ENCODE measurements at regions of chr19 and their contacts with region 1.

Region 1: GRCh38 chr19:13833330-13834243 is 38.3 kb downstream of the ZSWIM4 start:
- DNase-seq: peak; percentile 86
- ATAC-seq: peak; percentile 89
- H3K4me3 ChIP-seq: no peak overlapping the region
- H3K27ac ChIP-seq: peak overlapping the region; percentile 20
- H3K4me1 ChIP-seq: peaks cover 31% of the 10 kb centered on the region
- H3K27me3 ChIP-seq: no peaks in the 10 kb centered on the region
- CTCF ChIP-seq: peak; percentile 49
- POLR2A ChIP-seq: peak; percentile 78
- RAD21 ChIP-seq: no peak; the same call in 1 of the 2 replicates

Region 2: GRCh38 chr19:12789904-12790619 is 1043.5 kb before region 1 on chr19:
- CTCF ChIA-PET with region 1: no interaction called
- POLR2A ChIA-PET with region 1: no interaction called
- dilution Hi-C with region 1: no loop called
- in situ Hi-C with region 1: loop called (anchors 25 kb)
- intact Hi-C with region 1: no loop called
- DNase-seq: peak; percentile 93
- ATAC-seq: peak; percentile 60
- H3K4me3 ChIP-seq: peak overlapping the region; percentile 39
- H3K27ac ChIP-seq: peak overlapping the region; percentile 89
- H3K4me1 ChIP-seq: peaks cover 27% of the 10 kb centered on the region
- H3K27me3 ChIP-seq: no peaks in the 10 kb centered on the region
- CTCF ChIP-seq: no peak
- POLR2A ChIP-seq: peak; percentile 15; the same call in 1 of the 2 replicates
- RAD21 ChIP-seq: no peak

Region 3: GRCh38 chr19:13774217-13775191 is 59.1 kb before region 1 on chr19 and contains the start of gene C19orf53:
- CTCF ChIA-PET with region 1: no interaction called
- POLR2A ChIA-PET with region 1: interaction called, 11 read pairs
- dilution Hi-C with region 1: no loop called
- in situ Hi-C with region 1: no loop called
- intact Hi-C with region 1: no loop called
- DNase-seq: peak; percentile 94
- ATAC-seq: peak; percentile 98
- H3K4me3 ChIP-seq: peak within 1 kb of the TSS; percentile 78
- H3K27ac ChIP-seq: peak within 1 kb of the TSS; percentile 82
- H3K4me1 ChIP-seq: peaks cover 7% of the 10 kb centered on the region; the same call in 1 of the 2 replicates
- H3K27me3 ChIP-seq: no peaks in the 10 kb centered on the region
- CTCF ChIP-seq: no peak
- POLR2A ChIP-seq: peak; percentile 74; the same call in 1 of the 2 replicates
- RAD21 ChIP-seq: no peak
- total RNA-seq, gene C19orf53: 61.3 and 68.3 TPM in 2 replicates

Region 4: DNA sequence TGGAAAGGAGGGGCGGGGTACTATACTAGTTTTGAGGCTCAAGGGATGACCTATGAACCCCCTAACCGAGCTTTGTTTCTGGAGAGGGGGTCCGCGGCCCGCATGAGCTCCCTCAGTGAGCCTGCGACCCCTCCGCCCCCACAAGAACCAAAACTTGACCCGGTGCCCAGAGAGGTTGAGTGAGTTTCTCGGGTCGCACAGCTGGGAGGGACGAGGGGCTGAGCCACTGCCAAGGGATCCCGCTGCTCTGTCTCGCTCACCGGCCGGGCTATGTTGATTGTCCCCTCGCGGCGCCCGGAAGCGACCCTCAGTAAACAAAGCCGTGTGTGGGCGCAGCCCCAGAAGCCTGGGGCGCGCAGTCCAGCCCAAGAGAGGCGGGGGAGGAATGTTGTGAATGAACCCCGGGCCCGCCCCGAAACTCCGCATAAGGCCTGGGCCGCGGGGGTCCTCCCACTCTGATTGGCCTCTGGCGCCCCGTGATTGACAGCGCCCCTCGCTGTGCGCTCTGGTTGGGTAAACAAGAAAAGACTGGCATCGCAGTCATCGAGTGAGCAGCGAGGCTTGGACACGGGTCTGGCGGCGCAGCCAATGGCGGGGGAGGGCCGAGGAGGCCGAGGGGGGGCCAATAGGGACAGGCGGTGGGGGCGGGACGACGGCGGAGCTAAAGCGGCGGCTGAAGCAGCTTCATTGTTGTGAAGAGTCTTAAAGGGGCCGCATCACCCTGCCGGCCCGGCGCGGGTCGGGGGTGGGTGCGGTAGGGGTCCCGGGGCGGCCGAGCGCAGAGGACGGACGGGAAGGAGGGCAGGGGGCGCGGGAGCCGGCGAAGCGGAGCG is 38.6 kb before region 1 on chr19 and contains the start of gene ZSWIM4:
- CTCF ChIA-PET with region 1: no interaction called
- POLR2A ChIA-PET with region 1: interaction called, 14 read pairs
- dilution Hi-C with region 1: no loop called
- in situ Hi-C with region 1: no loop called
- intact Hi-C with region 1: loop called (anchors 5 kb)
- DNase-seq: peak; percentile 99
- ATAC-seq: peak; percentile 89
- H3K4me3 ChIP-seq: peak within 1 kb of the TSS; percentile 86
- H3K27ac ChIP-seq: peak within 1 kb of the TSS; percentile 95
- H3K4me1 ChIP-seq: peaks cover 7% of the 10 kb centered on the region
- H3K27me3 ChIP-seq: no peaks in the 10 kb centered on the region
- CTCF ChIP-seq: no peak
- POLR2A ChIP-seq: peak; percentile 78
- RAD21 ChIP-seq: no peak
- total RNA-seq, gene ZSWIM4: 1.9 and 2.2 TPM in 2 replicates

Region 5: DNA sequence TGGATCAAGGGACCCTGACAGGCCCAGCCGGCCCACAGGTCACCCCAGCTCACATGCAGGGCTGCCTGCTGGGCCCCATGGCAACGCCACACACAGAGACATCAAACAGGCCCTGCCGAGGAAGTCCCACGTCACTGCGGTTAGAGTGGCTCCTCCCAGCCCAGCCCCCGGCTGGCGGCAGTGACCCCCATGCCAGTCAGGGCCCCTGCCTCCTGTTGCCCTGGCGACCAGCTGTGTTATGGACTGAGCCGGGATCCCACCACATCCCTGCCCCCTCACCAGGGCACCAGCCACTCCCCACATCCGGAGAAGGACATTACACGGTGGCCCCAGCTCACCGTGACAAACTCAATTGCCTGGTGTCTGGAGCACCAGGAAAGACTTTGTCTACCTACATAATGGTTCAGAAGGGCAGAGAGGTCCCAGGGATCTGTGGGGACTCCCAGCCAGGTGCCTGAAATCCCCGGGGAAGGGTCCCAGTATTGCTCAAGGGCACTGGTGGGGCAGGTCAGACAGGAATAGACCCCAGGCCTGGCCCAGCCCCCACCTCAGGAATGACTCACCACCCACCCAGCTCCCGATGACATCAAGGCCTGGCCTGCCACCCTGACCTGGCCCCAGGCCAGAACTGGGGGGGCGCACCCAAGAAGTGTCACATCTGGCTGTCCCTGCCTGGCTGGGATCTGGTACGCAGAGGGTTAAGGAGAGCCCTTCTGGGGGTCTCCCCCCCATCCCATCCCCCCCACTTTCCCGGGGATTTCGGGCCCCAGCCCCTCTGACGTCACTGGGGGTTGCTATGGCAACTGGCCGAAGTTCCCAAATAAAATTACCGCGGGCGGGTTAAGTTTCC is 13.2 kb after region 1 on chr19:
- CTCF ChIA-PET with region 1: interaction called, 3 read pairs
- POLR2A ChIA-PET with region 1: interaction called, 10 read pairs
- dilution Hi-C with region 1: no loop called
- in situ Hi-C with region 1: no loop called
- intact Hi-C with region 1: no loop called
- DNase-seq: peak; percentile 93
- ATAC-seq: peak; percentile 13
- H3K4me3 ChIP-seq: peak overlapping the region; percentile 6; the same call in 1 of the 2 replicates
- H3K27ac ChIP-seq: peak overlapping the region; percentile 99
- H3K4me1 ChIP-seq: peaks cover 39% of the 10 kb centered on the region
- H3K27me3 ChIP-seq: no peaks in the 10 kb centered on the region
- CTCF ChIP-seq: no peak
- POLR2A ChIP-seq: no peak
- RAD21 ChIP-seq: 0 out of 2 replicates have a peak, but pooled peaks have one; percentile 12

Measured in IMR-90 (cell line).